ENCODE measurements at regions of chr4 and their contacts with region 1.

Region 1: GRCh38 chr4:26325191-26325590 is 4.4 kb downstream of the RBPJ start:
- DNase-seq: no peak
- H3K4me3 Mint-ChIP-seq: peak overlapping the region; percentile 62
- H3K27ac Mint-ChIP-seq: peak overlapping the region; percentile 78
- H3K4me1 Mint-ChIP-seq: peaks cover 47% of the 10 kb centered on the region
- H3K27me3 Mint-ChIP-seq: no peaks in the 10 kb centered on the region

Region 2: GRCh38 chr4:26028793-26029567 is 296.2 kb before region 1 on chr4:
- CTCF ChIA-PET with region 1: interaction called, 29 read pairs
- POLR2A ChIA-PET with region 1: interaction called, 3 read pairs
- intact Hi-C with region 1: loop called (anchors 1 kb)
- DNase-seq: peak; percentile 85
- H3K4me3 Mint-ChIP-seq: no peak overlapping the region
- H3K27ac Mint-ChIP-seq: no peak overlapping the region
- H3K4me1 Mint-ChIP-seq: peaks cover 16% of the 10 kb centered on the region
- H3K27me3 Mint-ChIP-seq: peaks cover 2% of the 10 kb centered on the region

Region 3: GRCh38 chr4:26372525-26373172 is 47.5 kb after region 1 on chr4:
- CTCF ChIA-PET with region 1: interaction called, 10 read pairs
- POLR2A ChIA-PET with region 1: interaction called, 6 read pairs
- intact Hi-C with region 1: loop called (anchors 5 kb)
- DNase-seq: peak; percentile 45
- H3K4me3 Mint-ChIP-seq: no peak overlapping the region
- H3K27ac Mint-ChIP-seq: peak overlapping the region; percentile 2
- H3K4me1 Mint-ChIP-seq: peaks cover 62% of the 10 kb centered on the region
- H3K27me3 Mint-ChIP-seq: no peaks in the 10 kb centered on the region

Measured in activated CD4-positive, alpha-beta memory T cell treated with anti-CD3 and anti-CD28 coated beads for 36 hours (primary cell).